Activated T-helper 1 cell treated with anti-CD3 and anti-CD28 coated beads, Interleukin-12 subunit alpha, Interleukin-12 subunit beta, Interleukin-2, Interleukin-4 antibody, amounts not matched to agents 30 ng/mL and 10 ng/mL and 1 ng/mL, durations not matched to agents 14 hours and 24 hours and 36 hours (primary cell): ENCODE measurements at regions of chr6 and their contacts with region 1.

Region 1: GRCh38 chr6:7107578-7108195 is at the start of gene RREB1:
- DNase-seq: peak; percentile 34
- H3K4me3 Mint-ChIP-seq: peak within 1 kb of the TSS; percentile 96
- H3K27ac Mint-ChIP-seq: peak within 1 kb of the TSS; percentile 92
- H3K4me1 Mint-ChIP-seq: peaks cover 41% of the 10 kb centered on the region
- H3K27me3 Mint-ChIP-seq: peaks cover 21% of the 10 kb centered on the region
- total RNA-seq, gene RREB1: 12.3 and 12.7 TPM in 2 replicates

Region 2: GRCh38 chr6:6676910-6677441 is 430.7 kb before region 1 on chr6:
- intact Hi-C with region 1: loop called (anchors 5 kb)
- DNase-seq: peak; percentile 70
- H3K4me3 Mint-ChIP-seq: no peak overlapping the region
- H3K27ac Mint-ChIP-seq: no peak overlapping the region
- H3K4me1 Mint-ChIP-seq: peaks cover 24% of the 10 kb centered on the region
- H3K27me3 Mint-ChIP-seq: no peaks in the 10 kb centered on the region

Region 3: DNA sequence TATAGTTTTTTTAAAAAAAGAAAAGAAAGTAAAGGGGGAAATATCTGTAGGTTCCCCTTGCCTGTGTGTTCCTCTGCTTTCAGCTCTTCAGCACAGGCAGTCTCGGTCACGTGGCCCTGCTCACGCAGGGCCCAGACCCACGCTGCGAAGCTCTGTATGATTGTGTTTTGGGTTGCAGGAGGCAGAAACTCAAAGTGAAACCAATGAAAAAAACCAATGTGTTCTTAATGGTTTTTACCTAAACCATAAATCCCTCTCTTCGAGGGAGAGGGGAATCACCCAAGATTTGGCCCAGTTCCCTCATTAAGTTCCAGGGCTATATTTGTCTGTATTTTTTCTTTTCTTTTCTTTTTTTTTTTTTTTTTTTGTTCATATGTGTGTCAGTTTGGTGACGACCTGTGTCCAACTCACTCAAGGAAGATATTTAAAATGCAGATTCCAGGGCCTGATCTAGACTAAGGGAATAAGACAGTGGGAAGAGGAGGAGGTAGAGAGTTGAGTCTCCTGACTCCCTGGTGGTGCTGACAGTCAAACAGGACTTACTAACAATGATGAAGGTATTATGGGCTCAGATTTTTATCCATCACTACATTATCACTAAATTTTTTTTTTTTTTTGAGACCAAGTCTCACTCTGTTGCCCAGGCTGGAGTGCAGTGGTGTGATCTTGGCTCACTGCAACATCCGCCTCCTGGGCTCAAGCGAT is 33.7 kb before region 1 on chr6:
- intact Hi-C with region 1: loop called (anchors 1 kb)
- DNase-seq: peak; percentile 55
- H3K4me3 Mint-ChIP-seq: no peak overlapping the region
- H3K27ac Mint-ChIP-seq: peak overlapping the region; percentile 74
- H3K4me1 Mint-ChIP-seq: peaks cover 13% of the 10 kb centered on the region
- H3K27me3 Mint-ChIP-seq: peaks cover 70% of the 10 kb centered on the region

Region 4: GRCh38 chr6:7140631-7141378 is 33.1 kb after region 1 on chr6:
- intact Hi-C with region 1: loop called (anchors 1 kb)
- DNase-seq: peak; percentile 78
- H3K4me3 Mint-ChIP-seq: peak overlapping the region; percentile 84
- H3K27ac Mint-ChIP-seq: peak overlapping the region; percentile 84
- H3K4me1 Mint-ChIP-seq: peaks cover 68% of the 10 kb centered on the region
- H3K27me3 Mint-ChIP-seq: no peaks in the 10 kb centered on the region

Region 5: DNA sequence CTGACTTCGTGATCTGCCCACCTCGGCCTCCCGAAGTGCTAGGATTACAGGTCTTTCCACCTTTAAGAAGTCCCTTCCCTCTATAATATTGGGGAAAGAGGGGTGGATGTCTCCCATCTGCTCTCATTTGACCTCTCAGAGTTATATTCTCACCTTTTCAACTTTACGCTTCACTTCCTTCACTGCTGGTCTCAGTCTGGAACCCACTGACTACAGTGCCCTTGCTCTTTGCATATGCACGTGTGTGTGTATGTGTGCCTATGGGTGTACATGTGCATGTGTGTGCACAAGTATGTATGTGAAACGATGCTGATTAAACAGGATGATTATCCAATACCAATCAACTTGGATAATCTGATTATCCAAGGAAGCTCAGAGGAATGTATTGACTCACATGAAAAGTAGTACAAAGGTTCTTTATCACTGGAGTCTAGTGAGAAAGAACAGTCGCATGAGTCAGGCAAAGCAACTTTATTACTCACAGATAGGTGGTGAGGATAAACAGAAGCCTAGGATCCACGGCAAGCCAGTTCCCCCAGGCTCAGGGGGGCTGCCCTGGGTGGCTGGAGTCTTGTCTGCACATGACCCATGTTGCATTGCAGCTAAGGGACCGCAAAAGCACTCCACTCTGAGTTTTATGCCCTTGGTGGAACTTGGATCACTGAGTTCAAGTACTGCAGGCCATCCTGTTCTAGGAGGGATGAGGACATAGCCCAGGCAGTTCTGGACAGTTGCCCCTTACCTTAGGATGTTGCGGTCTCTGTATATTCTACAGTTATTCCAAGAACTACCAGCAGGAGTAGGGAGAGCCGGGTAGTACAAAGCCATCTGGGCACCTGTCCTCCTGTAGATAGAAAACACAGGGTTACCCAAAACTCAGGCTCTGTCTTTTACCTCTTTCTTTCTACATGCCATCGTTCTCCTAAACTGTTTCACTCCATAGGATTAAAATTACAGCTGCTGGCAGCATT is 533.2 kb after region 1 on chr6:
- intact Hi-C with region 1: no loop called
- DNase-seq: no peak
- H3K4me3 Mint-ChIP-seq: no peak overlapping the region
- H3K27ac Mint-ChIP-seq: no peak overlapping the region
- H3K4me1 Mint-ChIP-seq: no peaks in the 10 kb centered on the region
- H3K27me3 Mint-ChIP-seq: peaks cover 12% of the 10 kb centered on the region

Region 6: DNA sequence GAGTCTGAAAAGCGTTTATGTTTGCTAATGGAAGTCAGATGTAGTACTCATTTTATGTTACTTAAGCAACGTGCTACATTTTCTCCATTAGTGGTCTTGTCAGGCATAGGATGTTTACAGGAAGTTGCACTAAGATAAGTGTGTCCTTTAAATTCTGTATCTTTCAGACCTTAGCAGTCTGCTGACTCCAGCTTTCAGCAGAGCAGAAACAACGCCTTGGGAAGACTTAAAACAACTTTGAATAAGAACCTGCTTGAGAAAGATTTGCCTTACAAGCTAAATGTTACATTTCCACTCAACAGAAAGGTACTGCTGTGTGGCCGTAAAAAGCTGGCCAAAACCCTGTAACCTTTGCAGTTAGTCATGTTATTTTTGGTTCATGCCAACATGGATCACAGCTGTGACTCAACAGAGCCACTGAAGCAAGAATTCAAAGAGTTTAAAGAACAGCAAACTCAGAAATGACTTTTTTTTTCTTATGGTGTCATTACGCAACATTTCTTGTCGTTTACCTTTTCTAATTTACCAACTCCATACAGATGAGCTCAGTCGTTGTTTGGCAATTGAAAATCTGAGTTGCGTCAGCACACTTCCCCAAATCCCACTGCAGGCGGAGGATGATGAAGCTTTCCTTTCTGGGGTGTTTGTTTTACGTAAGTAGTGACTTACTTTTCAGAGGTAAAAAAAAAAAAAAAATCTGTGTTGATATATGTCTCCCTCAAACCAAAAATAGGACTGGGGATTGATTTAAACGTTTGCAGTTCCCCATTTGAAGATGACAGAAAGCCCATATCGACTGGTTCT is 590.3 kb after region 1 on chr6:
- intact Hi-C with region 1: loop called (anchors 5 kb)
- DNase-seq: no peak
- H3K4me3 Mint-ChIP-seq: peak overlapping the region; percentile 42
- H3K27ac Mint-ChIP-seq: peak overlapping the region; percentile 92
- H3K4me1 Mint-ChIP-seq: peaks cover 16% of the 10 kb centered on the region
- H3K27me3 Mint-ChIP-seq: peaks cover 4% of the 10 kb centered on the region